ENCODE measurements at regions of chr12 and their contacts with region 1.

Region 1: DNA sequence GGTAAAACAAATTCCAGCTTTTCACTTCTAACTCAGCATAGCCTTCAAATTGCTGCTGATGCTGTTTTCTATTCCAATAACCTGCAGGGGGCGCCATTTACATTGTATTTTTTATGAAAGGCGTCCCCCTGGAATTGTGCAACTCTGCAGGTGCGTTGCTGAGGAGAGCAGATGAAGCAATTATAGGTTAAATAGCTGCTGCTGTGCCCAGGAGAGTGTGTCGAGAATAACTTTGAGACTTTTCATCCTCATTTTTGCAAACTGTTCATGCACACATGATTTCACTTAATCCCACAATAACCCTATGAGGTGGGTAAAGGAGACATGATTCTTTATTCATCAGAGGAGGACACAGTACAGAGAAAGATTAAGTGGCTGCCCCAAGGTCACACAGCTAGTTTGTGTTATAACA is 75.7 kb downstream of the MYRFL start:
- DNase-seq: no peak
- H3K4me3 ChIP-seq: no peak overlapping the region
- H3K27ac ChIP-seq: no peak overlapping the region
- H3K27me3 ChIP-seq: no peaks in the 10 kb centered on the region
- CTCF ChIP-seq: peak; percentile 76

Region 2: DNA sequence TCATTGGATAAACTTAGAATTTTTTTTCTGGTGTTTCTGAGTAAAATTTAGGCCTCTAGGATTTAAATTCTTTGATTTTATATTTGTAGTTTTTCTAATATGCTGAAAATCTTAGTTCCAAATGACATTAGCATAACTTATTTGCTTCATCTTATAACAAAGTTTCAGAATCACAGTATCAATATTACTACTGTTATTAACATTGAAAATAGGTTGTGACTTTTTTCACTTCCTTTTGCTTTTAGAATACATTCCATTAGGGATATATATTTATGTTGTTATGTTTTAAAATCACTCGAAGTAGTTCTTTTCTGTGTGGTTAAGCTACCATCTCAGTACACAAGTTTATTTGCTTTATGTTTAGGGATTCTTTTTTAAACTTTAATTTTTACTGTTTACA is 149.2 kb before region 1 on chr12:
- CTCF ChIA-PET with region 1: no interaction called
- POLR2A ChIA-PET with region 1: no interaction called
- DNase-seq: no peak
- H3K4me3 ChIP-seq: no peak overlapping the region
- H3K27ac ChIP-seq: no peak overlapping the region
- H3K27me3 ChIP-seq: no peaks in the 10 kb centered on the region
- CTCF ChIP-seq: no peak

Region 3: DNA sequence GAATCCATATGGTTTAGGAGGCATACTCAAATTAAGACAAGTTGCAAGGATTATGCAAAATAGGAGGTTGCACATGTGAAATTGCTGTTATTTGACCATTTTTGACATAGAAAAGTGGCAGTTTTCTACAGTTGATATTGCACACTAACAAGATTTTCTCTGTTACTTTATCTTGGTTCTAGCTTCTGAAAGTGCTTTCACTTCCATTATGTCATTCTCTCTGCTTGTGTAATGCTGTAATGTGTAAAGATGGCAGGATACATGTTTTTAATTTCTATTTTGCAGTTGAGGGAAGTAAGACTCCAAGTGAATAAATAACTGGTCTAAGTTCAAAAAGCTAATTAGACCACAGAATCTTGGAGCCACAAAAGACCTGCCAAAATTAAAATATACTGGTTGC is 15.1 kb before region 1 on chr12:
- CTCF ChIA-PET with region 1: interaction called, 60 read pairs
- POLR2A ChIA-PET with region 1: no interaction called
- DNase-seq: no peak
- H3K4me3 ChIP-seq: no peak overlapping the region
- H3K27ac ChIP-seq: no peak overlapping the region
- H3K27me3 ChIP-seq: peaks cover 8% of the 10 kb centered on the region
- CTCF ChIP-seq: no peak

Region 4: GRCh38 chr12:69987579-69988091 is 86.9 kb after region 1 on chr12:
- CTCF ChIA-PET with region 1: interaction called, 16 read pairs
- POLR2A ChIA-PET with region 1: no interaction called
- DNase-seq: peak; percentile 72
- H3K4me3 ChIP-seq: peak overlapping the region; percentile 20; the same call in 1 of the 2 replicates
- H3K27ac ChIP-seq: peak overlapping the region; percentile 71
- H3K27me3 ChIP-seq: no peaks in the 10 kb centered on the region
- CTCF ChIP-seq: no peak

Region 5: DNA sequence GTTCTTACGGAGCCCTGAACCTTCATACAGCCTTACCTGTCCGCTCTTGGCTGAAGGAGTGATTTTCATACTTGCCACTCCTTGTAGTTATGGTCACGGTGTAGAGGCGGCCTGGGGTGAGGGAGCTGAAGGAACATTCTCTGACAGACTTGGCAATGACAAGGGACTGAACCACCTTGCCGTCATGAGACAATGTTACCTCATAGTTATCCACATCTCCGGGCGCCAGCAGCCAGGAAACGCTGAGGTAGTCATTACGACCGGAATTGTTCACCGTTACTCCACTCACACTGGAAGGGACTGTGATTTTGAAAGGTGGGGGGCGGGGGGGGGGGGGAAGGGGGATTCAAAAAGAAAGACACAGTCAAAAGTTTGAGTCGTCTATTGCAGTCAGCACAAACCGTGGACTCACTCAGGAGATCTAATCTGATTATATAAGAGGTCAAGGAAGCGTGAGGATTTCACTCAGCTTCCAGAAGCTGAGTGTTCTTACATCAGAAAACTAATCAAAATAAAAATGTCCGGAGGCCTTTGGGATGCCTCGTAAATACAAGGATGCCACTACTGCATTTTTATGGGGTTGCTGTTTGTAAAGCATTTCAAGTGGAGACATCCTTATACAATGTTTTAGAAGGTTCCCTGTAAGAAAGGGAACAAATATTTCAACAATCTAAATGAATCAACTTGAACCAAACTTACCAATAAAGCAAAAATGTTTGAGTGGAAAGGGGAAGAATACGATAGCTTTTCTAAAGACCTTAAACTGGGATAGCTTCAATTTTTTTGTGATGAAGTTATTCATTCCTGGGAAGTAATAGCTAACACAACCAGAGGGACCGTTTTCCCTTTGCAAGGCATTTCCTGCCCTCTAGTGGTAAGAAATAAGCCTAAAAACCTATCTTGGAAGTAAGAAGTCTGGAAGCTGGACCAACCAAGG is 675.9 kb after region 1 on chr12:
- CTCF ChIA-PET with region 1: interaction called, 96 read pairs
- POLR2A ChIA-PET with region 1: no interaction called
- DNase-seq: peak; percentile 50
- H3K4me3 ChIP-seq: no peak overlapping the region
- H3K27ac ChIP-seq: no peak overlapping the region
- H3K27me3 ChIP-seq: no peaks in the 10 kb centered on the region
- CTCF ChIP-seq: peak; percentile 83